ENCODE measurements at regions of chr20 and their contacts with region 1.

Region 1: GRCh38 chr20:50540620-50541605 is 30.7 kb downstream of the PTPN1 start:
- DNase-seq: peak; percentile 94
- H3K4me3 ChIP-seq: peak overlapping the region in 1 of 3 experiments; percentile 34
- H3K27ac ChIP-seq: peak overlapping the region; percentile 98
- H3K4me1 ChIP-seq: peaks cover 51% of the 10 kb centered on the region
- H3K27me3 ChIP-seq: no peaks in the 10 kb centered on the region
- CTCF ChIP-seq: peak; percentile 10 to 14
- POLR2A ChIP-seq: peak; percentile 71

Region 2: GRCh38 chr20:49310705-49311104 is 1230.2 kb before region 1 on chr20:
- CTCF ChIA-PET with region 1: no interaction called
- POLR2A ChIA-PET with region 1: no interaction called
- dilution Hi-C with region 1: no loop called
- intact Hi-C with region 1: no loop called
- DNase-seq: peak; percentile 80
- H3K4me3 ChIP-seq: no peak overlapping the region
- H3K27ac ChIP-seq: peak overlapping the region; percentile 27
- H3K4me1 ChIP-seq: peaks cover 8% of the 10 kb centered on the region
- H3K27me3 ChIP-seq: peaks cover 6 to 9% of the 10 kb centered on the region in 2 experiments
- CTCF ChIP-seq: no peak
- POLR2A ChIP-seq: no peak

Region 3: GRCh38 chr20:50471204-50471610 is 69.7 kb before region 1 on chr20:
- CTCF ChIA-PET with region 1: no interaction called
- POLR2A ChIA-PET with region 1: no interaction called
- dilution Hi-C with region 1: no loop called
- intact Hi-C with region 1: loop called (anchors 1 kb)
- DNase-seq: peak; percentile 78
- H3K4me3 ChIP-seq: no peak overlapping the region
- H3K27ac ChIP-seq: peak overlapping the region; percentile 30
- H3K4me1 ChIP-seq: peaks cover 34% of the 10 kb centered on the region
- H3K27me3 ChIP-seq: no peaks in the 10 kb centered on the region
- CTCF ChIP-seq: no peak
- POLR2A ChIP-seq: no peak

Region 4: GRCh38 chr20:50551288-50551687 is 10.4 kb after region 1 on chr20:
- CTCF ChIA-PET with region 1: interaction called, 99 read pairs
- POLR2A ChIA-PET with region 1: no interaction called
- dilution Hi-C with region 1: no loop called
- intact Hi-C with region 1: no loop called
- DNase-seq: no peak
- H3K4me3 ChIP-seq: no peak overlapping the region
- H3K27ac ChIP-seq: no peak overlapping the region
- H3K4me1 ChIP-seq: peaks cover 5% of the 10 kb centered on the region
- H3K27me3 ChIP-seq: no peaks in the 10 kb centered on the region
- CTCF ChIP-seq: no peak
- POLR2A ChIP-seq: no peak

Region 5: GRCh38 chr20:50561379-50562078 is 20.6 kb after region 1 on chr20:
- CTCF ChIA-PET with region 1: interaction called, 99 read pairs
- POLR2A ChIA-PET with region 1: interaction called, 7 read pairs
- dilution Hi-C with region 1: no loop called
- intact Hi-C with region 1: loop called (anchors 1 kb)
- DNase-seq: peak; percentile 97
- H3K4me3 ChIP-seq: peak overlapping the region in 1 of 3 experiments; percentile 3
- H3K27ac ChIP-seq: peak overlapping the region; percentile 84
- H3K4me1 ChIP-seq: peaks cover 47% of the 10 kb centered on the region
- H3K27me3 ChIP-seq: no peaks in the 10 kb centered on the region
- CTCF ChIP-seq: no peak
- POLR2A ChIP-seq: no peak